Dorsolateral prefrontal cortex (tissue), 120 donors: ENCODE measurements at regions of chr3 and their contacts with region 1.

Region 1: DNA sequence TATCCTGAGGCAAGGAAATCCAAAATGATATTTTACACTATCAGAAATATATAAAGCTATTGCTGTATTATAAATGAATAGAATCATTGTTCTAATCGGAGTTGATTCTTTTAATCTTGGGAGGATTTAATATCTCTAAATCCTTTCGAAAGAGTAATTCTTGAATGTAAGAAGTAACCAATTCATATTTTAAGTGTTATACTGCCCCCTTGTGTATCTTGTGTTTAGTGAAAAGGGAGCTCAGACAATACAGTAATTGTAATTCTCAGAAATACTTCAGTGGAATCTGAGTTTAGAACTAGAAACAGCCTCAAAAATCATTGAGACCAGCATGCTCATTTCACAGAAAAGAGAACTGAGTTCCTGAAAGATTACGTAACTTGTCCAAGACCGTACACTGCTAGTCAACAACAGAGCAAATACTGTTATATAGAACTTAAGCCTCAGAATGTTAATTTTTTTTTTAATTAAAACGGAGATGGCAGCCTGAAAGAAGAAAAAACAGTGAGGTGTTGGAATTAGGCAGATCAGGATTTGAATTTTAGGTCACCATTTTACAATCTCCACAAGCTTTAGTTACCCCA is 42.9 kb downstream of the PLCH1 start:
- DNase-seq: no peak
- H3K4me3 ChIP-seq: peak overlapping the region in 12 of 59 donors; percentile 2 to 41 (median 17)
- H3K27ac ChIP-seq: peak overlapping the region in 20 of 59 donors; percentile 0 to 53 (median 22)
- H3K27me3 ChIP-seq: no peaks in the 10 kb centered on the region
- CTCF ChIP-seq: peak; percentile 68 to 98 (median 87)

Region 2: GRCh38 chr3:154334973-154335420 is 1367.0 kb before region 1 on chr3:
- intact Hi-C with region 1: loop called in 1 of 2 experiments (anchors 5 kb)
- DNase-seq: no peak
- H3K4me3 ChIP-seq: no peak overlapping the region
- H3K27ac ChIP-seq: no peak overlapping the region
- H3K27me3 ChIP-seq: peaks cover 0 to 7% (median 0%) of the 10 kb centered on the region in 45 donors
- CTCF ChIP-seq: peak; percentile 41 to 78 (median 67)

Region 3: GRCh38 chr3:155352900-155353490 is 349.0 kb before region 1 on chr3:
- intact Hi-C with region 1: loop called (anchors 2 to 5 kb)
- DNase-seq: no peak
- H3K4me3 ChIP-seq: no peak overlapping the region
- H3K27ac ChIP-seq: no peak overlapping the region
- H3K27me3 ChIP-seq: peaks cover 0 to 4% (median 0%) of the 10 kb centered on the region in 45 donors
- CTCF ChIP-seq: peak; percentile 18 to 83 (median 64)

Region 4: GRCh38 chr3:155382396-155383042 is 319.5 kb before region 1 on chr3:
- intact Hi-C with region 1: loop called in 1 of 2 experiments (anchors 5 kb)
- DNase-seq: peak in 9 of 10 donors; percentile 14 to 72 (median 53)
- H3K4me3 ChIP-seq: no peak overlapping the region
- H3K27ac ChIP-seq: no peak overlapping the region
- H3K27me3 ChIP-seq: peaks cover 0 to 6% (median 0%) of the 10 kb centered on the region in 45 donors
- CTCF ChIP-seq: peak in 54 of 56 donors; percentile 16 to 76 (median 52)

Region 5: GRCh38 chr3:155744626-155745324 is 42.8 kb after region 1 on chr3 and contains the start of gene PLCH1:
- intact Hi-C with region 1: loop called in 1 of 2 experiments (anchors 5 kb)
- DNase-seq: peak in 9 of 10 donors; percentile 38 to 73 (median 59)
- H3K4me3 ChIP-seq: peak within 1 kb of the TSS; percentile 49 to 92 (median 76)
- H3K27ac ChIP-seq: peak within 1 kb of the TSS in 17 of 59 donors; percentile 0 to 71 (median 19)
- H3K27me3 ChIP-seq: no peaks in the 10 kb centered on the region
- CTCF ChIP-seq: no peak
- total RNA-seq, gene PLCH1: 7.6 to 36.4 (median 17.8) TPM

Region 6: GRCh38 chr3:155805802-155806618 is 104.0 kb after region 1 on chr3 and contains the start of gene C3orf33:
- intact Hi-C with region 1: loop called in 1 of 2 experiments (anchors 10 kb)
- DNase-seq: peak; percentile 36 to 86 (median 64)
- H3K4me3 ChIP-seq: peak within 1 kb of the TSS; percentile 62 to 93 (median 82)
- H3K27ac ChIP-seq: peak within 1 kb of the TSS; percentile 50 to 96 (median 87)
- H3K27me3 ChIP-seq: no peaks in the 10 kb centered on the region
- CTCF ChIP-seq: peak; percentile 56 to 97 (median 82)
- total RNA-seq, gene C3orf33: 4.2 to 12.5 (median 7.3) TPM

Region 7: GRCh38 chr3:155854141-155854940 is 152.4 kb after region 1 on chr3 and contains the start of gene SLC33A1:
- intact Hi-C with region 1: loop called in 1 of 2 experiments (anchors 10 kb)
- DNase-seq: peak; percentile 99 to 100 (median 100)
- H3K4me3 ChIP-seq: peak within 1 kb of the TSS; percentile 58 to 100 (median 93)
- H3K27ac ChIP-seq: peak within 1 kb of the TSS; percentile 58 to 99 (median 95)
- H3K27me3 ChIP-seq: no peaks in the 10 kb centered on the region
- CTCF ChIP-seq: peak in 44 of 56 donors; percentile 5 to 60 (median 30)
- total RNA-seq, gene SLC33A1: 18.5 to 34.5 (median 25.1) TPM

Region 8: DNA sequence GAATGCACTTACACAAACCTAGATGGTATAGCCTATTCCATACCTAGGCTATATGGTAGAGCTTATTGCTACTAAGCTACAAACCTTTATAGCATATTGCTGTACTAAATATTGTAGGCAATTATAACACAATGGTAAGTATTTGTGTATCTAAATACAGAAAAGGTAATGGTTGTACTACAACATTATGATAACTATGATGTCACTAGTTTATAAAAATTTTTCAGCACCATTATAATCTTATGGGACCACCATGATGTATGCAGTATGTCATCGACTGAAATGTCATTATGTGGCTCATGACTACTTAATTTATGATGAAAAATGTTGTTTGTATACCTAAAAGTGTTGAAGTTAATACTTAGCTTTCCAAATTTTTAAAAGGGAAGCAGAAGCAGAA is 415.6 kb after region 1 on chr3:
- intact Hi-C with region 1: no loop called
- DNase-seq: no peak
- H3K4me3 ChIP-seq: no peak overlapping the region
- H3K27ac ChIP-seq: no peak overlapping the region
- H3K27me3 ChIP-seq: peaks cover 0 to 4% (median 0%) of the 10 kb centered on the region in 45 donors
- CTCF ChIP-seq: no peak